CD4-positive, alpha-beta T cell (primary cell): ENCODE measurements at regions of chr10 and their contacts with region 1.

Region 1: GRCh38 chr10:122435212-122435827 is 19.1 kb upstream of the ARMS2 start:
- DNase-seq: peak in 3 of 14 experiments; percentile 71 to 77 (median 73)
- ATAC-seq: peak; percentile 49
- H3K4me3 ChIP-seq: no peak overlapping the region
- H3K4me3 Mint-ChIP-seq: no peak overlapping the region
- H3K27ac ChIP-seq: no peak overlapping the region
- H3K27ac Mint-ChIP-seq: peak overlapping the region; percentile 58
- H3K4me1 ChIP-seq: no peaks in the 10 kb centered on the region
- H3K4me1 Mint-ChIP-seq: peaks cover 12% of the 10 kb centered on the region
- H3K27me3 ChIP-seq: no peaks in the 10 kb centered on the region
- H3K27me3 Mint-ChIP-seq: no peaks in the 10 kb centered on the region
- CTCF ChIP-seq: peak; percentile 81

Region 2: DNA sequence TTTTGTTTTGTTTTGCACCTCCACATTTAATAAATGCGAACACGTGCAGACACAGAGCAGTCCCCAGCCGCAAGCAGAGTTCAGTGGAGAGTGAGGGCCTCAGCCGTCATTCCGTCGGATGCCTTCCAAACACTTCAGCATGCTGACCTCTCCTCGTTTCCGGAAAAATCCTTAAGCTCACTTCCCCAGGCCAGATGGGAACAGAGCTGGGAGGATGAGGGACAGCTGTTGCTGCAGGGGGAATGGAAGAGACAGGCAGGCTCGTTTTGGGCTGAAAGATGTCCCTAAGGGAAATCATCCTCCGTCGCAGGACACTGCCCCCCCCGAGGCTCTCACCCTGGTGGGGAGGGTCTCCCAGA is 819.9 kb before region 1 on chr10:
- CTCF ChIA-PET with region 1: no interaction called
- POLR2A ChIA-PET with region 1: no interaction called
- intact Hi-C with region 1: no loop called
- DNase-seq: no peak
- ATAC-seq: no peak
- H3K4me3 ChIP-seq: no peak overlapping the region
- H3K4me3 Mint-ChIP-seq: no peak overlapping the region
- H3K27ac ChIP-seq: no peak overlapping the region
- H3K27ac Mint-ChIP-seq: no peak overlapping the region
- H3K4me1 ChIP-seq: no peaks in the 10 kb centered on the region
- H3K4me1 Mint-ChIP-seq: no peaks in the 10 kb centered on the region
- H3K27me3 ChIP-seq: no peaks in the 10 kb centered on the region
- H3K27me3 Mint-ChIP-seq: peaks cover 14% of the 10 kb centered on the region
- CTCF ChIP-seq: no peak

Region 3: DNA sequence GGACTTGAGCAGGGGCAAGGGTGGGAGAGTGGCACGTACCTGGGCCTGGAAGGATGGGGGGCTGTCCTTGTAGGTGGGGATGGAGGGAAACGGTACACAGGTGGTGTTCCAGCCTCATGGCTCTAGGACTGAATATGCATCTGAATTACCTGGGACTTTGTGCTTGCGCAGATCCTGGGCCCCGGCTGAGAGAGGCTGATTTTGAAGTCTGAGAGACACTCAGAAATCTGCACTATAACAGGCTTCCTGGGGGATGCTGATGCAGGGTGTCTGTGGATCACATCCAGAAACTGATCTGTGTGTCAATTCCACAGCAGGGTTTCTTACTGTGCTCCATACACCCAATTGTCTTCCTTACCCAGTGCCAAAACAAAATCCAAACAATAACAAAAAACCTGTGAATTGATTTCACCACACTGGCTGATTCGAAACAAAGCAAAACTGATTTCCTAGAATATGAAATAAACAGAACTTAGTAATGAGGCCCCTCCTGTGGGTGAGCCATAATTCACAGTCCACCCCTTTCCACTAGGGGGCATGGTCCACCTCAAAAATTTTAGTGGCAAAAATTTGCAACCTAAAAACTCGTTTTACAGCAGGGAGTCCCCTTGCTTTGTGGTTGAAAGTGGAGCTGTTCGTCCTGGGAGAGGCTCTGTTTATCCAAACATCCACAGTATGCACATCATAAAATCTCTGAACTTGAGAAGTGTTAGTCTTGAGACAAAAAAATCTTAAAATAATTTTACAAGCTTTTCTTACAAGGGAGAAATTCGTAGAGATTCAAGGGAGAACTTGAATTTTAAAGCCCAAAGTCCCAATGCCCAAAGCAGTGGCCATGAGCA is 92.8 kb before region 1 on chr10:
- CTCF ChIA-PET with region 1: interaction called, 30 read pairs
- POLR2A ChIA-PET with region 1: no interaction called
- intact Hi-C with region 1: loop called (anchors 1 kb)
- DNase-seq: peak; percentile 41 to 79 (median 56)
- ATAC-seq: peak; percentile 80
- H3K4me3 ChIP-seq: no peak overlapping the region
- H3K4me3 Mint-ChIP-seq: no peak overlapping the region
- H3K27ac ChIP-seq: no peak overlapping the region
- H3K27ac Mint-ChIP-seq: no peak overlapping the region
- H3K4me1 ChIP-seq: peaks cover 7% of the 10 kb centered on the region
- H3K4me1 Mint-ChIP-seq: peaks cover 6% of the 10 kb centered on the region
- H3K27me3 ChIP-seq: peaks cover 0 to 2% of the 10 kb centered on the region in 2 experiments
- H3K27me3 Mint-ChIP-seq: peaks cover 7% of the 10 kb centered on the region
- CTCF ChIP-seq: peak; percentile 80

Region 4: GRCh38 chr10:122632031-122632430 is 196.7 kb after region 1 on chr10:
- CTCF ChIA-PET with region 1: no interaction called
- POLR2A ChIA-PET with region 1: no interaction called
- intact Hi-C with region 1: no loop called
- DNase-seq: peak in 1 of 14 experiments; percentile 25
- ATAC-seq: no peak
- H3K4me3 ChIP-seq: no peak overlapping the region
- H3K4me3 Mint-ChIP-seq: no peak overlapping the region
- H3K27ac ChIP-seq: no peak overlapping the region
- H3K27ac Mint-ChIP-seq: no peak overlapping the region
- H3K4me1 ChIP-seq: no peaks in the 10 kb centered on the region
- H3K4me1 Mint-ChIP-seq: no peaks in the 10 kb centered on the region
- H3K27me3 ChIP-seq: peaks cover 0 to 2% of the 10 kb centered on the region in 2 experiments
- H3K27me3 Mint-ChIP-seq: peaks cover 17% of the 10 kb centered on the region
- CTCF ChIP-seq: no peak